OCI-LY7 (cell line): ENCODE measurements at regions of chr12 and their contacts with region 1.

Region 1: DNA sequence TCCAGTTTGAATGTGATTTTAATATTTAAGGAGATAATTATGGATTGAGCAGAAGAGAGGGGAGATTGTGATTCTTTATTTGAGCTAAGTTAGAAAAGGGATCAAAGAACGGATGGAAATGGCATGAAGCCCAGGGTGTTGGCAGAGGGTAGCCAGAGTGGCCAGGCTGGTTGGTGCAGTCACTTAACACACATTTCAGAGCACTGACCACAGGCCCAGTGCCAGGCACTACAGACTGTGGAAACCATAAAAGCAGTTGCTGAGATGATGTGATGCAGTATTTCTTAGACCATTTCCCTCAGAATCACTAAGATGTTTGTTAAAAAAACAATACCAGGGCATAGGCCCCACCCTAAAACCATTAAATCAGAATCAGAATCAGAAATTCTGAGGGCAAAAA is 167.7 kb upstream of the AMIGO2 start:
- DNase-seq: no peak
- H3K4me3 ChIP-seq: no peak overlapping the region
- H3K27ac ChIP-seq: no peak overlapping the region
- H3K4me1 ChIP-seq: peaks cover 8% of the 10 kb centered on the region
- CTCF ChIP-seq: no peak

Region 2: GRCh38 chr12:47032644-47033043 is 214.8 kb before region 1 on chr12:
- CTCF ChIA-PET with region 1: no interaction called
- POLR2A ChIA-PET with region 1: no interaction called
- intact Hi-C with region 1: no loop called
- DNase-seq: peak; percentile 60
- H3K4me3 ChIP-seq: no peak overlapping the region
- H3K27ac ChIP-seq: no peak overlapping the region
- H3K4me1 ChIP-seq: no peaks in the 10 kb centered on the region
- CTCF ChIP-seq: peak; percentile 84

Region 3: GRCh38 chr12:47236109-47236714 is 11.2 kb before region 1 on chr12:
- CTCF ChIA-PET with region 1: no interaction called
- POLR2A ChIA-PET with region 1: interaction called, 11 read pairs
- intact Hi-C with region 1: no loop called
- DNase-seq: no peak
- H3K4me3 ChIP-seq: no peak overlapping the region
- H3K27ac ChIP-seq: no peak overlapping the region
- H3K4me1 ChIP-seq: no peaks in the 10 kb centered on the region
- CTCF ChIP-seq: no peak

Region 4: DNA sequence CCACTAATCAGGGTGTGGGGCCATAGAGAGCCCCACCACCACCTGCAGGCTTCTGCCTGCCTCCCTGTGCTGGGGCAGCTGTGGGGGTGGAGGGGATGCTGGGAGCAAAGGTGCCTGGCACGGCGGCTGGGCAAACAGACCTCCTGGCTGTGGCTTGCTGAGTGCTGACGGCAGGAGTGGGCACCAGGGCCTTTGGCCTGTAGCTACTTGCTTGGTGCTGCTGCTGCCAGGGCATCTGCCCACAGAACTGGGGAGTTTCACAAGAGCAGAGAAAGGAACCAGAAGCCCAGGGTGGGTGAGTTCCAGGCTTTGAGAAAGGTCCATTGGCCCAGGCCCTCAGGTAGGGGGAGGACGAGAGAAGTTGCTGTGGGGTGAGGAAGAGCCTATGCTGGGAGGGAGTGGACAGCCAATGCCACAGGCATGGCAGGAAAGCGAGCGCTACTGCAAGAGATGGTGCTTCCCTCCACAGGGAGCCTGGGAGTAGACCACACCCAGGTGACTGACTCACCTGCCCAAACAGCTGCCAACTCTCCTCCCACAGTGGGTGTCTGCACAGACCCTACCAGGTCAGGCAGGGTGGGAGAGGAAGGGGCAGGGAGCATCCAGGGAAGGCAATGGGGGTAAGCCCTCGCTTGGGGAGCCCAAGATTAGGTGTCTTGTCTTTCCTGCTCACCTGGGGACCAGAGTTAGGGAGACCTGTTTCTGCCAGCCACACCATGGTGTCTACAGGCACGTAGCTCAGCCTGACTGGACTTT is 611.3 kb after region 1 on chr12:
- CTCF ChIA-PET with region 1: no interaction called
- POLR2A ChIA-PET with region 1: no interaction called
- intact Hi-C with region 1: no loop called
- DNase-seq: no peak
- H3K4me3 ChIP-seq: no peak overlapping the region
- H3K27ac ChIP-seq: no peak overlapping the region
- H3K4me1 ChIP-seq: peaks cover 8% of the 10 kb centered on the region
- CTCF ChIP-seq: no peak